HEK293 (cell line): ENCODE measurements at regions of chr11 and their contacts with region 1.

Region 1: DNA sequence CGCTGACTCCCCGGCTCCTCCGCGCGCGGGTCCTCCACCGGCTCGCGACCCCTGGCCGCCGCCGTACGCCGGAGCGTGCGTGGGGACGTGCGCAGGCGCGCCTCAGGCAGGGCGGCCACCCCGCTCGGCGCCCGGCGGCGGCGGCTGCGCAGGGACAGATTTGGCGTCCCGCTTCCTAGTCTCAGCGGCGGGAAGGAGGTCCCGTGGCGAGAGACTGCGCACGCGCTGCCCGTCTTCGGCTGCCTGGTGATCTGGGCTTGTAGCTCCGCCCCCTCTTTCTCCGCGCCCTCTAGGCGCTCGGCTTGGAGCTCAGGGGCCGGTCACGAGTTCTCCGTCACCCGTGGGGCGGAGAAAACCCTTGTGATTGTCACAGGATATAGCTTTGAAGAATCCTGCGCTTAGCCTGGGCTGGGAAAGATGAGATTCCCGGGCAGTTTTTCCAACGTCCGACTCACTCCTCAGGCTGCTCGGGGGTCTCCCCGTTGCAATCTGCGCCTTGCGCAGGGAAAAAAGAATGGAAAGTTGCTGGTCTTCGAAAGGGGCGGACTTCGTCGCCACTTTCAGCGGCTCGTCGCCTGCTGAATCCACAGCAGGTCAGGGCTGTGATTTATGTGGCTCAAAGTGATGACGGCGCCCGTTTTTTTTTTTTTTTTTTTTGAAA is at the start of gene PATL1:
- H3K4me3 ChIP-seq: peak within 1 kb of the TSS; percentile 80
- H3K27ac ChIP-seq: peak within 1 kb of the TSS; percentile 66; the same call in 1 of the 2 replicates
- H3K4me1 ChIP-seq: no peaks in the 10 kb centered on the region
- CTCF ChIP-seq: no peak

Region 2: GRCh38 chr11:59560702-59561469 is 108.2 kb before region 1 on chr11:
- CTCF ChIA-PET with region 1: interaction called, 4 read pairs
- POLR2A ChIA-PET with region 1: interaction called, 14 read pairs
- H3K4me3 ChIP-seq: peak overlapping the region; percentile 70
- H3K27ac ChIP-seq: peak overlapping the region; percentile 18
- H3K4me1 ChIP-seq: no peaks in the 10 kb centered on the region
- CTCF ChIP-seq: no peak

Region 3: DNA sequence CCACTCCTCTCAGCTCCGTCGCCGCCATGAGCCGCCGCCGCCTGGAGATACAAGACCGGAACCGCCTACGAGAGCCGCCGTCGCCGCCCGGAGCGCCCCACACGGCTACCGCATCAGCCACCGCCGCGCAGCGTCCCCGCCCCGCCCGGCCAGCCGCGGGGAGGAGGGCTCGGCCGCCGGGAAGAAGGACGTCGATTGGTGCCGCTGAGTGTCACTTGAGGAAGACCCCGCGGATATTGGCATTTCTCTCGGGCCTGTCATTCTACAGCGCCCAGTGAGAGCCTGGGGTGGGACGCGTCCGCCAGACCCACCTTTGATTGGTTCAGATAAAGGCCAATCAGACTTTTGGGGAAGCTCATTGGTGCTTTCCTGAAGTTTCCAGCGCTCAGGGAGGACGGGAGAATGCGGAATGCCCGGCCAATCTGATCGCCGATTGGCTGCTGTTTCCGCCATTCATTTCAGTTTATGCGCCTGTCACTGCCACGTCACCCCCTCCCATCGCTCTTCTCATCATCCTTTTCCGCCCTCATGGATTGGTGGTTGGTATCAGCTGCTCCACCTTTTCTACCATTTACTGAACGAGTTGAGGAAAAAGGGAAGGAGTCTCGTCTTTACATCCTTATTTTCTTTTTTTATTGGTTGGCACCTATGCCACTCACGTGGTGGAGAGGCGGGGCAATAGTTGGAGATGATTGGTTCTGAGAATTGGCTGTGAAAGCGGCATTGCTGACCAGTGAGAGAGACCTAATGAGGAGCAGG is 53.3 kb before region 1 on chr11 and contains the start of gene OSBP:
- CTCF ChIA-PET with region 1: no interaction called
- POLR2A ChIA-PET with region 1: interaction called, 39 read pairs
- H3K4me3 ChIP-seq: peak within 1 kb of the TSS; percentile 79
- H3K27ac ChIP-seq: peak within 1 kb of the TSS; percentile 63; the same call in 1 of the 2 replicates
- H3K4me1 ChIP-seq: no peaks in the 10 kb centered on the region
- CTCF ChIP-seq: no peak

Region 4: DNA sequence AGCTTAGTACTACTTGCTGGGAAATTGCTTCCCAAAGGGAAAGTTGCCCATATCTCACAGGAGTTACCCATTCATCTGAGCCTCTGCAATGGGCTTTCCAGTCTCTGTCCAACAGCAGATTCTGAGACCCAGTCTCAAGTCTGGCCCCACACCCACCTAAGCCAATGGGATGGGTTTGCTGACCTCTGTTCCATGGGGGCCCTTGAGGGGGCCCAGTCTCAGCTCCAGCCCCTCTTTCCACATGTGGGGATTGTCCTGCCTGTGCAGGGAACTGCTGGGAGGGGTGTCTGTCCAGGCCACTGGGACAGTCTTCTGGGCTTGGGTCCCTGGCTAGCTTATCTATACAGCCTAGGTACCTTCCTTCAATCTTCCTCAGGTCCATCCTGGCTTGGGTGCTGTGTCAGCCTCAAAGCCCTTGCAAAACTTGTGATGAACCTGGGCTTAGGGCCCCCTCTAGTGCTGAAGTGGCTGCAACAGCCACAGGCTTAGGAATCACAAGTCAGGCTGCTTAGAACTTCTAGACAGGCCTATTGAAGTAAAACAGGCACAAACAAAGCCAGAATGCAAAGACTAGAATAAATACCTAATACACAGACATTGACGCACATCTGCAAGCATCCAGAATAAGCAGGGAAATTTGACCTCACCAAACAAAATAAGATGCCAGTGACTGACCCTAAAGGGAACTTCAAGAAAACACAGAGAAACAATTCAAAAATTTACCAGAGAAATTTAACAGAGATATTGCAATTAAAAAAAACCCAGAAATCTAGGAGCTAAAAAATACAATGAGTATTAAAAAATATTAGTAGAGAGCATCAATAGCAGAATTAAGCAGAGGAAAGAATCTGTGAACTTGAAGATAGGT is 11.4 kb after region 1 on chr11:
- CTCF ChIA-PET with region 1: interaction called, 11 read pairs
- POLR2A ChIA-PET with region 1: interaction called, 4 read pairs
- H3K4me3 ChIP-seq: no peak overlapping the region
- H3K27ac ChIP-seq: no peak overlapping the region
- H3K4me1 ChIP-seq: no peaks in the 10 kb centered on the region
- CTCF ChIP-seq: peak; percentile 56

Region 5: DNA sequence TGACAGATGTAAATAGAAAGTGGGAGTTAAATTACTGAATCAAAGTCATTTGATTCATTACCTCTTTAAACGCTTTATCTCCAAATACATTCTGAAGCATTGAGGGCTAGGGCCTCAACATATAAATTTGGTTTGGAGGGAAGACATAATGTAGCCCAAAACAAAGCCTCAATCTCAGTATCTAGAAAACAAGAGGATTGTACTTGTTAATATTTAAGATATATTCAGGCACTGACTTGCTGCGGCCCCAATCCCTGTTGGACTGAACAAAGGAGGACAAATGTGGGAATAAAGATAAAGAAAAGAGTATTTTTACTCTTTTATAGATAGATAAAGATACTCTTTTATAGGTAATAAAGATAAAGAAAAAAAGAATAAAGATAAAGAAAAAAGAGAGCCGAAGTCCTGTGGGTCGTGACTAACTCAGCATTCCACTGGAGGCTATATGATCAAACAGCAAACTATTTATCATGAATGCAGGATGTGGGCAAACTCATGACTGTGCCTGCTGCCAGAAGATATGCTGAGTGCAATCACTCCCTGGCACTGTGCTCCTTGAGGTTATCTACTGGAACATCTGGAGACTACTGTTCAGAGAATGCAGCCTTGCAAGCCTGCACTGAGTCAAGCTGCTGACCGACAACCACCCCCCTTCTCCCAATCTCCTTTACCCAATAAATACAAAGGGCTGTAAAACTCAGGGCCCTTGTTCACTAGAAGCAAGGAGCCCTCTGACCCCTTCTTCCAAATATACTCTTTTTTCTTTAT is 37.6 kb after region 1 on chr11:
- CTCF ChIA-PET with region 1: no interaction called
- POLR2A ChIA-PET with region 1: interaction called, 15 read pairs
- H3K4me3 ChIP-seq: no peak overlapping the region
- H3K27ac ChIP-seq: no peak overlapping the region
- H3K4me1 ChIP-seq: no peaks in the 10 kb centered on the region
- CTCF ChIP-seq: no peak

Region 6: DNA sequence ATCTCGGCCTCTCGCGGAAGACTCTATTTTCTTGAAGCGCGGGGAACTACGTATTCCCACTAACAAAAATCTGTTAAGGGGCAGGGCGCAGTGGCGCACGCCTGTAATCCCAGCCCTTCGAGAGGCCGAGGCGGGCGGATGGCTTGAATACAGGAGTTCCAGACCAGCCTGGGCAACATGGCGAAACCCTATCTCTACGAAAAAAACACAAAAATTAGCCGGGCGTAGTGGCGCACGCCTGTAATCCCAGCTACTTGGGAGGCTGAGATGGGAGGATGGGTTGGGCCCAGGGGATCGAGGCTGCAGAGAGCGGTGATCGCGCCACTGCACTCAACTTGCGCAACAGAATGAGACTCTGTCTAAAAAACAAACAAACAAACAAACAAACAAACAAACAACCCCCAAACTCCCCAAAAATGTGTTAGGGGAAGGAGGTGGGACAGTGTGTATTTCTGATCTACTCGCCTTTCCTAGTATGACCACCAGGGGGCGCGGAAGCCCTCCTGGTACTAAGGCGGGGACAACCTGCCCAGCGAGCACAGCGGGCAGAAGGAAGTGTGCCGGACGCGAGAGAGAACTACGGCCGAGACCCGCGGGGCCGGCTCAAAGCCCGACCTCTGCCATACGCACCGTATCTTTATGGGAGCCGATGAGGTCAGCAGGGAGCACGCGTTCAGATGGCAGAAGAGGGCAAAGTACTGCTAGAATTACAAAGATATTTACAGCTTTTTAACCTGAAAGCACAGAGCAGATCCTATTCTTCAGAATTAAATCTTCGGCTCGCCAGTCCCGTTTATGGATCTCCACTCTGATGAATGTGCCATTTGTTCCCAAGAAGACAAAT is 84.8 kb after region 1 on chr11:
- CTCF ChIA-PET with region 1: no interaction called
- POLR2A ChIA-PET with region 1: interaction called, 17 read pairs
- H3K4me3 ChIP-seq: peak overlapping the region; percentile 82
- H3K27ac ChIP-seq: no peak overlapping the region; the same call in 1 of the 2 replicates
- H3K4me1 ChIP-seq: no peaks in the 10 kb centered on the region
- CTCF ChIP-seq: peak; percentile 89